ENCODE measurements at regions of chr19 and their contacts with region 1.

Region 1: GRCh38 chr19:40217027-40217810 is 965 bp downstream of the TTC9B start:
- DNase-seq: no peak
- H3K4me3 ChIP-seq: no peak overlapping the region
- H3K27ac ChIP-seq: no peak overlapping the region
- H3K4me1 ChIP-seq: peaks cover 19% of the 10 kb centered on the region
- H3K27me3 ChIP-seq: peaks cover 12% of the 10 kb centered on the region
- CTCF ChIP-seq: no peak
- POLR2A ChIP-seq: no peak

Region 2: GRCh38 chr19:40155749-40156265 is 61.4 kb before region 1 on chr19:
- intact Hi-C with region 1: loop called (anchors 10 kb)
- DNase-seq: no peak
- H3K4me3 ChIP-seq: no peak overlapping the region
- H3K27ac ChIP-seq: no peak overlapping the region
- H3K4me1 ChIP-seq: no peaks in the 10 kb centered on the region
- H3K27me3 ChIP-seq: no peaks in the 10 kb centered on the region
- CTCF ChIP-seq: no peak
- POLR2A ChIP-seq: no peak

Region 3: GRCh38 chr19:40266119-40266518 is 48.9 kb after region 1 on chr19:
- intact Hi-C with region 1: no loop called
- DNase-seq: no peak
- H3K4me3 ChIP-seq: no peak overlapping the region
- H3K27ac ChIP-seq: no peak overlapping the region
- H3K4me1 ChIP-seq: peaks cover 40% of the 10 kb centered on the region
- H3K27me3 ChIP-seq: no peaks in the 10 kb centered on the region
- CTCF ChIP-seq: no peak
- POLR2A ChIP-seq: no peak

Region 4: GRCh38 chr19:40305403-40305802 is 88.2 kb after region 1 on chr19:
- intact Hi-C with region 1: no loop called
- DNase-seq: no peak
- H3K4me3 ChIP-seq: no peak overlapping the region
- H3K27ac ChIP-seq: no peak overlapping the region
- H3K4me1 ChIP-seq: no peaks in the 10 kb centered on the region
- H3K27me3 ChIP-seq: no peaks in the 10 kb centered on the region
- CTCF ChIP-seq: peak; percentile 51 to 66 (median 60)
- POLR2A ChIP-seq: no peak